T-cell (primary cell): ENCODE measurements at regions of chr4 and their contacts with region 1.

Region 1: GRCh38 chr4:65453398-65453797 is 216.9 kb downstream of the EPHA5 start:
- DNase-seq: no peak
- ATAC-seq: no peak
- H3K4me3 ChIP-seq: no peak overlapping the region
- H3K4me3 Mint-ChIP-seq: no peak overlapping the region
- H3K27ac ChIP-seq: no peak overlapping the region
- H3K27ac Mint-ChIP-seq: no peak overlapping the region
- H3K4me1 ChIP-seq: no peaks in the 10 kb centered on the region
- H3K4me1 Mint-ChIP-seq: no peaks in the 10 kb centered on the region
- H3K27me3 ChIP-seq: no peaks in the 10 kb centered on the region
- H3K27me3 Mint-ChIP-seq: no peaks in the 10 kb centered on the region

Region 2: GRCh38 chr4:65139998-65140397 is 313.4 kb before region 1 on chr4:
- CTCF ChIA-PET with region 1: no interaction called
- POLR2A ChIA-PET with region 1: no interaction called
- DNase-seq: no peak
- ATAC-seq: no peak
- H3K4me3 ChIP-seq: no peak overlapping the region
- H3K4me3 Mint-ChIP-seq: no peak overlapping the region
- H3K27ac ChIP-seq: no peak overlapping the region
- H3K27ac Mint-ChIP-seq: no peak overlapping the region
- H3K4me1 ChIP-seq: no peaks in the 10 kb centered on the region
- H3K4me1 Mint-ChIP-seq: no peaks in the 10 kb centered on the region
- H3K27me3 ChIP-seq: no peaks in the 10 kb centered on the region
- H3K27me3 Mint-ChIP-seq: no peaks in the 10 kb centered on the region

Region 3: DNA sequence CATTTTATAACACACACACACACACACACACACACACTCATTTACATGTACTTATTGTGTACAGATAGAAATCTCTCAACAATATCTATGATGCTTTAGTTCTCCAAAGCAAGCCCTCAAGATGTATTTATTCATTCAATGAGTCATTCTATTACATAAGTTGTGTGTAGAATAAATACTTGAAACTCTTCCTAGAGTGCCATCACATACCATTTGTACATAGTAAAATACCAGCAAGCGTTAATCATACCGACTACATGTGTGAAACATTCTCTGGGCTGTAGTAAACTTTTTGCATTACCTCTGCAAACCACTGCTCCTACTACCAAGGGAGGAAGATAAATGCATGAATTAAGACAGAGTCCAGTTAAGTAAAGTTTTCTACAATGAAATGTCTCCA is 145.9 kb after region 1 on chr4:
- CTCF ChIA-PET with region 1: no interaction called
- POLR2A ChIA-PET with region 1: interaction called in 1 of 2 experiments, 10 read pairs
- DNase-seq: no peak
- ATAC-seq: no peak
- H3K4me3 ChIP-seq: no peak overlapping the region
- H3K4me3 Mint-ChIP-seq: no peak overlapping the region
- H3K27ac ChIP-seq: no peak overlapping the region
- H3K27ac Mint-ChIP-seq: no peak overlapping the region
- H3K4me1 ChIP-seq: no peaks in the 10 kb centered on the region
- H3K4me1 Mint-ChIP-seq: no peaks in the 10 kb centered on the region
- H3K27me3 ChIP-seq: no peaks in the 10 kb centered on the region
- H3K27me3 Mint-ChIP-seq: no peaks in the 10 kb centered on the region